ENCODE measurements at regions of chr13 and their contacts with region 1.

Region 1: GRCh38 chr13:71546881-71547280 is 320.1 kb downstream of the DACH1 start:
- DNase-seq: no peak
- ATAC-seq: no peak
- H3K4me3 ChIP-seq: no peak overlapping the region
- H3K27ac ChIP-seq: no peak overlapping the region
- H3K4me1 ChIP-seq: no peaks in the 10 kb centered on the region
- H3K27me3 ChIP-seq: no peaks in the 10 kb centered on the region
- CTCF ChIP-seq: no peak

Region 2: DNA sequence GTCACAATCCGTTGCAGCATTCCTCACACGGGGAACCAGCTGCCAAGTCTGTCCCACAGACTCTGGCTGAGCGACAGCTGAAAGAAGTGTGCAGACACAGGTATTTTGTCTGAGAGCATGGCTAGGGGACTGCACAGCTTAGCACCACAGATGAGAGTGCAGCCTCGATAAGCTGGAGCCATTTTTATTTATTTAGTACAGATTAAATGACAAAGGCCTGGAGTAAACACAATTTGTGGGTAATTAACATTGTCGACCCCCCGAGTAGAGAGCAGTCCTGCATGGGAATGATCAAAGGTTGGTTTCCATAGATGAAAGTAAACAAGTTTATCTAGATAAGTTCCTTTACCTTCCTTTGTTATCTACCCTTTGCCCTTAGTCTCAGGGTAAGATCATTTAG is 516.1 kb before region 1 on chr13:
- intact Hi-C with region 1: loop called in 1 of 10 experiments (anchors 10 kb)
- DNase-seq: no peak
- ATAC-seq: no peak
- H3K4me3 ChIP-seq: no peak overlapping the region
- H3K27ac ChIP-seq: no peak overlapping the region
- H3K4me1 ChIP-seq: no peaks in the 10 kb centered on the region
- H3K27me3 ChIP-seq: no peaks in the 10 kb centered on the region
- CTCF ChIP-seq: no peak

Region 3: GRCh38 chr13:71577127-71577526 is 30.2 kb after region 1 on chr13:
- intact Hi-C with region 1: no loop called
- DNase-seq: no peak
- ATAC-seq: no peak
- H3K4me3 ChIP-seq: no peak overlapping the region
- H3K27ac ChIP-seq: no peak overlapping the region
- H3K4me1 ChIP-seq: no peaks in the 10 kb centered on the region
- H3K27me3 ChIP-seq: no peaks in the 10 kb centered on the region
- CTCF ChIP-seq: no peak